ENCODE measurements at regions of chr16 and their contacts with region 1.

Region 1: GRCh38 chr16:84186685-84187437 is at the start of gene TAF1C:
- DNase-seq: peak; percentile 92 to 96
- H3K4me3 ChIP-seq: peak within 1 kb of the TSS; percentile 96
- H3K4me3 Mint-ChIP-seq: peak within 1 kb of the TSS; percentile 93
- H3K27ac Mint-ChIP-seq: peak within 1 kb of the TSS; percentile 96
- H3K4me1 ChIP-seq: peaks cover 4% of the 10 kb centered on the region; the same call in 1 of the 2 replicates
- H3K4me1 Mint-ChIP-seq: peaks cover 6% of the 10 kb centered on the region
- H3K27me3 ChIP-seq: no peaks in the 10 kb centered on the region
- H3K27me3 Mint-ChIP-seq: no peaks in the 10 kb centered on the region
- CTCF ChIP-seq: peak; percentile 97 to 98
- total RNA-seq, gene TAF1C: 69.9 and 79.7 TPM in 2 replicates

Region 2: DNA sequence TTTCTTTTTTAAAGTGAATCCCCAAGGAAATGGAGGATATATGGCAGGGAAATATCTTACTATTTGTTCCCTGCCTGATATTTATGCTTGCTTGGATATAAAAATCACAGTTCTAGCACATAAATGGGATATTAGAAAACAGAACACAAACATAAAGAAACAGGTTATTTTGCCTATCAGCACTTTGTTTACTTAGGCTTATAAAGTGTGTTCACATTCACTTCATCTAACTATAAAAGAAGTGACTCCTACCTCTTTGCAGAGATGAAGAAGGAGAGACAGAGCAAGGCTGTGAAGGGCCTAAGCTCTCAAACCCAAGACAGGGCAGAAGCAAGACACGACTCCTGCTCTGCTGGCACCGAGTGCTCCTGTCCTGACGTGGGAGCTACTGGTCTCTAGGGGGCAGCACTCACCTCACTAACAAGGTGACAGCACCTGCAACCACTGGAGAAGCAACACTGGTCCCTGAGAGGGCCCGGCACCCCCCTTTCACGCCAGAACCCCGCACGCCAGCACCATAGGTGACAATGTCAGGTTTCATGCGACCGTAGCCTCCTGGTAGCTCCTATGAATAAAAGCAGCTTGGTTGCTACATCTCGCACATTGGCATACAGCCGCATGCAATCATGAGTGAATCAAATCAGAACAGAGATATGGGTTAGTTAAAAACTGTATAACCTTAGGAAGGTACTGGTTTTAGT is 102.1 kb before region 1 on chr16:
- CTCF ChIA-PET with region 1: interaction called, 11 read pairs
- POLR2A ChIA-PET with region 1: no interaction called
- intact Hi-C with region 1: no loop called
- DNase-seq: peak; percentile 81 to 83
- H3K4me3 ChIP-seq: no peak overlapping the region
- H3K4me3 Mint-ChIP-seq: no peak overlapping the region
- H3K27ac Mint-ChIP-seq: no peak overlapping the region
- H3K4me1 ChIP-seq: no peaks in the 10 kb centered on the region
- H3K4me1 Mint-ChIP-seq: no peaks in the 10 kb centered on the region
- H3K27me3 ChIP-seq: no peaks in the 10 kb centered on the region
- H3K27me3 Mint-ChIP-seq: no peaks in the 10 kb centered on the region
- CTCF ChIP-seq: peak; percentile 88 to 92

Region 3: GRCh38 chr16:84144859-84145639 is 41.8 kb before region 1 on chr16 and contains the starts of genes DNAAF1 and HSDL1:
- CTCF ChIA-PET with region 1: interaction called, 12 read pairs
- POLR2A ChIA-PET with region 1: no interaction called
- intact Hi-C with region 1: loop called (anchors 1 kb)
- DNase-seq: peak; percentile 89 to 98
- H3K4me3 ChIP-seq: peak within 1 kb of the TSS; percentile 64
- H3K4me3 Mint-ChIP-seq: peak within 1 kb of the TSS; percentile 93
- H3K27ac Mint-ChIP-seq: peak within 1 kb of the TSS; percentile 88
- H3K4me1 ChIP-seq: no peaks in the 10 kb centered on the region
- H3K4me1 Mint-ChIP-seq: peaks cover 15% of the 10 kb centered on the region
- H3K27me3 ChIP-seq: no peaks in the 10 kb centered on the region
- H3K27me3 Mint-ChIP-seq: peaks cover 10% of the 10 kb centered on the region
- CTCF ChIP-seq: peak; percentile 58 to 70
- total RNA-seq, gene DNAAF1: 0.07 TPM in 1 of 2 replicates, not detected in the other
- total RNA-seq, gene HSDL1: 21.0 and 23.7 TPM in 2 replicates

Region 4: GRCh38 chr16:84161801-84162200 is 25.1 kb before region 1 on chr16:
- CTCF ChIA-PET with region 1: interaction called, 14 read pairs
- POLR2A ChIA-PET with region 1: no interaction called
- intact Hi-C with region 1: no loop called
- DNase-seq: no peak
- H3K4me3 ChIP-seq: no peak overlapping the region
- H3K4me3 Mint-ChIP-seq: no peak overlapping the region
- H3K27ac Mint-ChIP-seq: no peak overlapping the region
- H3K4me1 ChIP-seq: no peaks in the 10 kb centered on the region
- H3K4me1 Mint-ChIP-seq: no peaks in the 10 kb centered on the region
- H3K27me3 ChIP-seq: no peaks in the 10 kb centered on the region
- H3K27me3 Mint-ChIP-seq: peaks cover 24% of the 10 kb centered on the region
- CTCF ChIP-seq: no peak

Region 5: DNA sequence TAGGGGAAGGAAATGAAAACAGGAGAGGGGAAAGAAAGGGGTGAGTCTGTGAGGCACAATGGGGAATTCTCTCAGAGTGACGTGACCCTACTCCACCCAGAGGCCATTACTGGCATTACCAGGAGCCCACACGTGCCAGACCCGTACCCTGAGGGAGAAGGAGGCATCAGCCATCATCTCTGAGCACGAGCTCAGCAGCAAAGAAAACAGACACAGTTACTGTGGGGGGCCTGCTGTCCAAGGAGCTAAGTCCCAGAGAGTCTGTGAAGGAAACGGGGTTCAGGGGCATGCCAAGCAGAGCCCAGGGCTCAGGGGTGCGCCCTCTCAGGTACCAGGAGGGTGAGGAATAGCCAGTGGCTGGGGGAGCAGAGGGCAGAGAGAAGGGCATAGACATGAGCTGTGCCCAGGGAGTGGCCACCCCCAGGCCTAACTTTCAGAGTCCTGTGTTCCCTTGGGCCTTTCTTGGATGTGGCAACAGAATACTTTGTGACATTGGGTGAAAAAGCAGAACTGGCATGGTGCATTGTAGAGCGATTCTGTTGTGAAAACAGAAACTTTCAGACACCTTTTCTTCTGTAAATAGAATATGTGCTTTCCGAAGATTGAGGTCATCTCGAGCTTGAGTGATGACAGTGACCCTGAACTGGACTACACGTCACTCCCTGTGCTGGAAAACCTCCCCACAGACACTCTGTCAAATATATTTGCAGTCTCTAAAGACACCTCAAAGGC is 11.3 kb before region 1 on chr16:
- CTCF ChIA-PET with region 1: interaction called, 19 read pairs
- POLR2A ChIA-PET with region 1: no interaction called
- intact Hi-C with region 1: no loop called
- DNase-seq: peak; percentile 70 to 80
- H3K4me3 ChIP-seq: no peak overlapping the region
- H3K4me3 Mint-ChIP-seq: no peak overlapping the region
- H3K27ac Mint-ChIP-seq: peak overlapping the region; percentile 36
- H3K4me1 ChIP-seq: peaks cover 16% of the 10 kb centered on the region
- H3K4me1 Mint-ChIP-seq: no peaks in the 10 kb centered on the region
- H3K27me3 ChIP-seq: no peaks in the 10 kb centered on the region
- H3K27me3 Mint-ChIP-seq: no peaks in the 10 kb centered on the region
- CTCF ChIP-seq: peak; percentile 67 to 69